ENCODE measurements at regions of chr2 and their contacts with region 1.

Region 1: GRCh38 chr2:127293748-127294562 is at the start of gene ERCC3:
- DNase-seq: peak; percentile 70 to 82 (median 72)
- H3K4me3 ChIP-seq: peak within 1 kb of the TSS; percentile 63 to 96
- H3K4me3 Mint-ChIP-seq: peak within 1 kb of the TSS; percentile 96 to 99 (median 98)
- H3K27ac ChIP-seq: peak within 1 kb of the TSS; percentile 86
- H3K27ac Mint-ChIP-seq: peak within 1 kb of the TSS; percentile 86 to 98 (median 95)
- H3K4me1 ChIP-seq: peaks cover 13% of the 10 kb centered on the region
- H3K4me1 Mint-ChIP-seq: peaks cover 23 to 50% (median 28%) of the 10 kb centered on the region in 4 donors
- H3K27me3 ChIP-seq: no peaks in the 10 kb centered on the region
- H3K27me3 Mint-ChIP-seq: no peaks in the 10 kb centered on the region
- total RNA-seq, gene ERCC3: 59.2 to 62.9 TPM

Region 2: GRCh38 chr2:127086990-127087790 is 206.8 kb before region 1 on chr2:
- CTCF ChIA-PET with region 1: no interaction called
- POLR2A ChIA-PET with region 1: no interaction called
- intact Hi-C with region 1: loop called (anchors 10 kb)
- DNase-seq: no peak
- H3K4me3 ChIP-seq: no peak overlapping the region
- H3K4me3 Mint-ChIP-seq: no peak overlapping the region
- H3K27ac ChIP-seq: no peak overlapping the region
- H3K27ac Mint-ChIP-seq: peak overlapping the region in 4 of 7 donors; percentile 15 to 66 (median 59)
- H3K4me1 ChIP-seq: peaks cover 38% of the 10 kb centered on the region
- H3K4me1 Mint-ChIP-seq: peaks cover 13 to 43% (median 28%) of the 10 kb centered on the region in 4 donors
- H3K27me3 ChIP-seq: no peaks in the 10 kb centered on the region
- H3K27me3 Mint-ChIP-seq: peaks cover 0 to 2% of the 10 kb centered on the region in 2 donors

Region 3: DNA sequence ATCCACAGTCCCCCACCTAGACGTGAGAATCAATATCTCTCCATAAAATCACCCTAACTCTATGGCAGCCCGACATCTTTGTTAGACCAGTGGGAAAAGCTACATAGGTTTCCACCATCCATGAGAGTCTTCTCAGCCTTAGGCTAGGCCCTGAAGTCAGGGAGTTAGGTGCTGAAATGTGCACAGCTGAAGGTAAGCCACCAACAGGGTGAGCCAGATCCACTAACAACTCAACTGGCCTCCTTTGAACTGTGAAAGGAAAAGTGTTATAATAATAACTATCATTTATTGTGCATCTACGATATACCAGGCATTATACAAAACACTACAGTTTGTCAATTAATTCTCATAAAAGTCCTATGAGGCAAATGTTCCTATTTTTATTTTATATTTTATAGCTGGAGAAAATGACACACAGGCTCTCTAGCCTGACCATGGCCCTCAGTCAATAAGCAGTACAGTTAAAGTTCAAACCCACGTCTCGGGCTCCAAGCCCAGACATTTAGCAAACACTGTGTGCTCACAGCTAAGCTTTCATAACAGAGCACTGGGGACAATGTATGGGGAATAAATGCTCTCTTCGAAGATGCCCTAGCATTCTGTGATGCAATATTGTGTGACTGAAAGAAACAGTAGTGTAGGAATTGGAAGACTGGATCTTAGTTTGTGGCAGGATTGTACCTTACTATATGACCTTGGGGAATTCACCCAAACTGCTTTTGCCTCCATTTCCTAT is 62.7 kb before region 1 on chr2:
- CTCF ChIA-PET with region 1: no interaction called
- POLR2A ChIA-PET with region 1: no interaction called
- intact Hi-C with region 1: no loop called
- DNase-seq: no peak
- H3K4me3 ChIP-seq: no peak overlapping the region
- H3K4me3 Mint-ChIP-seq: no peak overlapping the region
- H3K27ac ChIP-seq: no peak overlapping the region
- H3K27ac Mint-ChIP-seq: no peak overlapping the region
- H3K4me1 ChIP-seq: no peaks in the 10 kb centered on the region
- H3K4me1 Mint-ChIP-seq: peaks cover 0 to 3% (median 1%) of the 10 kb centered on the region in 4 donors
- H3K27me3 ChIP-seq: peaks cover 5% of the 10 kb centered on the region
- H3K27me3 Mint-ChIP-seq: peaks cover 9% of the 10 kb centered on the region in 2 donors

Region 4: GRCh38 chr2:128090945-128091725 is 797.2 kb after region 1 on chr2 and contains the start of gene UGGT1:
- CTCF ChIA-PET with region 1: interaction called, 3 read pairs
- POLR2A ChIA-PET with region 1: no interaction called
- intact Hi-C with region 1: loop called (anchors 5 kb)
- DNase-seq: peak; percentile 91 to 95 (median 93)
- H3K4me3 ChIP-seq: peak within 1 kb of the TSS; percentile 86 to 98
- H3K4me3 Mint-ChIP-seq: peak within 1 kb of the TSS; percentile 88 to 98 (median 93)
- H3K27ac ChIP-seq: peak within 1 kb of the TSS; percentile 81
- H3K27ac Mint-ChIP-seq: peak within 1 kb of the TSS; percentile 90 to 98 (median 96)
- H3K4me1 ChIP-seq: peaks cover 33% of the 10 kb centered on the region
- H3K4me1 Mint-ChIP-seq: peaks cover 27 to 61% (median 40%) of the 10 kb centered on the region in 4 donors
- H3K27me3 ChIP-seq: no peaks in the 10 kb centered on the region
- H3K27me3 Mint-ChIP-seq: no peaks in the 10 kb centered on the region
- total RNA-seq, gene UGGT1: 56.8 to 60.2 TPM

Measured in CD4-positive, alpha-beta memory T cell (primary cell).